ENCODE measurements at regions of chrX and their contacts with region 1.

Region 1: DNA sequence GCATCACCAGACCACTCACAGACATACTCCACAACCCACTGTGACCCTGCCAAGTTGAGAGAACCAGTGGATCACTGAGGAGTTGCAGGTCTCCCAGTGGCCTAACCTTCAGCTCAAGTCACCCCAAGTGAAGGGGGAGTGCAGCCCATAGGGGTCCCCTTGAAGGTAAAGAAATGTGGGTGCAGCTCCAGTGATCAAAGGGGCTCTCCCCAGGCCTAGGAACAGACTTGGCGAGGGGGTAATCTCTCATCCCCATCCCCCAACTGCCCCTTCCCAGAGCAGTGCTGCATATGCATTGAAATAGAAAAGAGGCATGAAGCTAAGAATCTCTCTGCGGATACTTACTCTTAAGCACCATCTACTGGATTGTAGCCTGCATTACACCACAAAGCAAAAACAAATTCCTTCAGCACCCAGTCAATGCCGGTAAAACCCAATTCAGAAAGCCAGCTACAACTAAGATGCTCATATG is 27.0 kb downstream of the MAGEE1 start:
- DNase-seq: no peak
- H3K4me3 ChIP-seq: no peak overlapping the region
- H3K27ac ChIP-seq: no peak overlapping the region
- H3K4me1 ChIP-seq: no peaks in the 10 kb centered on the region
- H3K27me3 ChIP-seq: no peaks in the 10 kb centered on the region
- CTCF ChIP-seq: peak; percentile 60

Region 2: GRCh38 chrX:76279000-76279399 is 175.5 kb before region 1 on chrX:
- intact Hi-C with region 1: loop called (anchors 5 kb)
- DNase-seq: peak; percentile 54
- H3K4me3 ChIP-seq: no peak overlapping the region
- H3K27ac ChIP-seq: no peak overlapping the region
- H3K4me1 ChIP-seq: no peaks in the 10 kb centered on the region
- H3K27me3 ChIP-seq: no peaks in the 10 kb centered on the region
- CTCF ChIP-seq: peak; percentile 37

Region 3: DNA sequence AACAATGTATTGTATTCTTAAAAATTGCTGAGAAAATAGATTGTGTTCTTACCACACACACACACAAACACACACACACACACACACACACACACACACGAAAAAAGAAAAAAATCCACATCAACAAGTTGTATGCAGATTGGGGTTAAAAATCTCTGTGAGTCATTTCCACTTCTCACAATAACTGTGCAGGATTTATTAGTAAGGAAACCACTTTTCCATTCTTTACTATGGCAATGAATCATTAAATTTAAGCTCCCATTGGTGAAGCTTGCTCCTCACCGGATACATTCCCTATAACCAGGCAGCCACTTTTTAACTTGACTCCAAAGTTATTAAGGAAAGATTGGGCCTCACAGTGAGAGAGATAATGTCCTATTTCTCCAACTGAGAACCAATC is 46.7 kb before region 1 on chrX:
- intact Hi-C with region 1: no loop called
- DNase-seq: no peak
- H3K4me3 ChIP-seq: no peak overlapping the region
- H3K27ac ChIP-seq: no peak overlapping the region
- H3K4me1 ChIP-seq: no peaks in the 10 kb centered on the region
- H3K27me3 ChIP-seq: no peaks in the 10 kb centered on the region
- CTCF ChIP-seq: no peak

Measured in colonic mucosa (tissue), 4 donors.